A673 (cell line): ENCODE measurements at regions of chr7 and their contacts with region 1.

Region 1: DNA sequence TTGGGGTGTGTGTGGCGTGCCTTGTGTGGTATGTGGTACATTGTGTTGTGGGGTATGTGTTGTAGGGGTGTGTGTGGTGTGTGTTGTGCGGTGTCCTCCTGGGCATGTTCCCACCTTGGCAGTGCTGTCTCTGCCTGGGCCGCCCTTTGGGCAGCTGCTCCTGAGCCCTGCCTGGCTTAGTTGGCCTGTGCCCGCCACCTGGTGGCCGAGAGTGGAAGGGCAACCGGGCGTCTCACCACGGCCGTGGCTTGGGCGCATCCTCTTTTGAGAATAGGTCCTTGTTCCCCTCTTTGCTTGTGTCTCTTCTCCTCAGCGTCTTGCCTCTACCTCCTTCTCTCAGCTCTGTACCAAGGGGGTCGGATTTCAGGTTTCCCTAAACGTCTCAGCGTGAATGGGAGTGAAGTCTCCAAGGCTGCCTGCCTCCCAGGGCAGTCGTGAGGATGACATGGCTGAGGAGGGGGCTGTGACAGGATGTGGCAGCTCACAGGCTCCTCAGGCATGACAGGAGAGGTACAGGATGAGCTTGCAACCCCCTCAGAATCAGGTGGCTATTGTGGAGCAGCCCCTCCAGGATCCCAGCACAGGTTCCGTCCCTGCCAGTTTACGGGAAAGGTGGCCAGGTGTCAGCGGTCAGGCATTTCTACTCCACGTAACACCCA is 98.4 kb upstream of the PODXL start:
- DNase-seq: peak; percentile 92
- H3K4me3 ChIP-seq: no peak overlapping the region
- H3K27ac ChIP-seq: no peak overlapping the region
- H3K4me1 ChIP-seq: no peaks in the 10 kb centered on the region
- H3K27me3 ChIP-seq: no peaks in the 10 kb centered on the region
- CTCF ChIP-seq: peak; percentile 90

Region 2: DNA sequence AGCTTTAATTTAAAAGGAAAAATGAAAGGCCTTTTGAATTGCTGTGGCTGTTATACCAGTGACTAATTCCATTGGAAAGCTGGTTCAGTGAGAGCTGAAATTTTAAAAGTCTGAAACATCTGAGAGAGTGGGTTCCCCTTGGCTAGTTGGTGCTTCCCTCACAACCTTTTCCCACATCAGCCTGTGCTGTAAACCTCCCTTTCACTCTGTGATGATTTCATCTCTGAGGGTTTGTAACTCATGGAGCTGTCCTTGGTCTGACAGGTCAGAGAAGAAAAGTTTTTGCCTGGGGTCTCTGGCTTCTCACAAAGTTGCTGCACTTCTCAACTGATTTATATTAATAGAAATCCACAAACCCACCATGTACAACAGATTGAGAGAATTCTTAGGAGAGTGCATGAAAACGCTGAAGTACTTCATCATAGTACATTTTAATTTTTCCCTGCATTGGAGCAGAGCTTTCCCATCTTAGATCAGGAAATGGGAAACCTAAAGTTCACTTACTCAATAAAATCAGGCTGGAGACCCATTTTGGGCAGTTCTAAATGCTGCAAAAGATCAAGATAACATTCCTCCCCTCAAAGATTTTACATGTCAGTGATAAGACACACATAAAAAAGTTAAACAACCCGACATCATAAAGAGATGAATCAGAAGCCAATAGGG is 484.2 kb before region 1 on chr7:
- CTCF ChIA-PET with region 1: no interaction called
- POLR2A ChIA-PET with region 1: no interaction called
- intact Hi-C with region 1: no loop called
- DNase-seq: no peak
- H3K4me3 ChIP-seq: no peak overlapping the region
- H3K27ac ChIP-seq: no peak overlapping the region
- H3K4me1 ChIP-seq: no peaks in the 10 kb centered on the region
- H3K27me3 ChIP-seq: no peaks in the 10 kb centered on the region
- CTCF ChIP-seq: no peak

Region 3: GRCh38 chr7:131507592-131508331 is 147.0 kb before region 1 on chr7:
- CTCF ChIA-PET with region 1: interaction called, 6 read pairs
- POLR2A ChIA-PET with region 1: no interaction called
- intact Hi-C with region 1: loop called (anchors 1 kb)
- DNase-seq: peak; percentile 80
- H3K4me3 ChIP-seq: no peak overlapping the region
- H3K27ac ChIP-seq: no peak overlapping the region
- H3K4me1 ChIP-seq: peaks cover 5% of the 10 kb centered on the region
- H3K27me3 ChIP-seq: no peaks in the 10 kb centered on the region
- CTCF ChIP-seq: peak; percentile 92

Region 4: DNA sequence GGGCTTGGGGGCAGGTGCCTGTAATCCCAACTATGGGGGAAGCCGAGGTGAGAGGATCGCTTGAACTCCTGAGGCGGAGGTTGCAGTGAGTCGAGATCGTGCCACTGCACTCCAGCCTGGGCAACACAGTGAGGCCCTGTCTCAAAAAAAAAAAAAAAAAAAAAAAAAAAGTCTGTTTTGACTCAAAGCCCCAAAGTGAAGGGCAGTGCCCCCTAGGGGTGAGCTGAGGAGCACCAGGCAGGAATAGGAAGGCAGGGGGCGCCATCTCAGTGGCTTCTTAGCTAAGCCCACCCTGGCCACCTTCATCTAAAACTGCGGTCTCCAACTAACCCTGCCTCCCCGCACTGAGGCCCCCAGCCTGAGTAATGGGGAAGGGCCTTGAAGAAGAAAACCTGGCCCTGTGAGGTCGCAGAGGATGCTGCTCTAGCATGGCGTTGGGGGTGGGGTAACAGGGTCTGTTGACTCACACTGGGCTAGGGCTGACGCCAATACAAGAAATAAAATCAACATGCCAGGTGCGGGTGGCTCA is 108.2 kb before region 1 on chr7:
- CTCF ChIA-PET with region 1: no interaction called
- POLR2A ChIA-PET with region 1: no interaction called
- intact Hi-C with region 1: no loop called
- DNase-seq: peak; percentile 81
- H3K4me3 ChIP-seq: no peak overlapping the region
- H3K27ac ChIP-seq: no peak overlapping the region
- H3K4me1 ChIP-seq: peaks cover 20% of the 10 kb centered on the region
- H3K27me3 ChIP-seq: no peaks in the 10 kb centered on the region
- CTCF ChIP-seq: peak; percentile 98